ENCODE measurements at regions of chr9 and their contacts with region 1.

Region 1: GRCh38 chr9:20479419-20480155 is 142.7 kb downstream of the MLLT3 start:
- DNase-seq: no peak
- H3K4me3 ChIP-seq: no peak overlapping the region
- H3K27ac ChIP-seq: no peak overlapping the region
- H3K4me1 ChIP-seq: no peaks in the 10 kb centered on the region
- H3K27me3 ChIP-seq: no peaks in the 10 kb centered on the region
- CTCF ChIP-seq: no peak
- POLR2A ChIP-seq: no peak

Region 2: GRCh38 chr9:20209391-20210340 is 269.9 kb before region 1 on chr9:
- intact Hi-C with region 1: no loop called
- DNase-seq: no peak
- H3K4me3 ChIP-seq: no peak overlapping the region
- H3K27ac ChIP-seq: no peak overlapping the region
- H3K4me1 ChIP-seq: no peaks in the 10 kb centered on the region
- H3K27me3 ChIP-seq: no peaks in the 10 kb centered on the region
- CTCF ChIP-seq: no peak
- POLR2A ChIP-seq: no peak

Region 3: GRCh38 chr9:20462410-20462809 is 17.2 kb before region 1 on chr9:
- intact Hi-C with region 1: no loop called
- DNase-seq: no peak
- H3K4me3 ChIP-seq: no peak overlapping the region
- H3K27ac ChIP-seq: no peak overlapping the region
- H3K4me1 ChIP-seq: no peaks in the 10 kb centered on the region
- H3K27me3 ChIP-seq: no peaks in the 10 kb centered on the region
- CTCF ChIP-seq: no peak
- POLR2A ChIP-seq: no peak

Region 4: DNA sequence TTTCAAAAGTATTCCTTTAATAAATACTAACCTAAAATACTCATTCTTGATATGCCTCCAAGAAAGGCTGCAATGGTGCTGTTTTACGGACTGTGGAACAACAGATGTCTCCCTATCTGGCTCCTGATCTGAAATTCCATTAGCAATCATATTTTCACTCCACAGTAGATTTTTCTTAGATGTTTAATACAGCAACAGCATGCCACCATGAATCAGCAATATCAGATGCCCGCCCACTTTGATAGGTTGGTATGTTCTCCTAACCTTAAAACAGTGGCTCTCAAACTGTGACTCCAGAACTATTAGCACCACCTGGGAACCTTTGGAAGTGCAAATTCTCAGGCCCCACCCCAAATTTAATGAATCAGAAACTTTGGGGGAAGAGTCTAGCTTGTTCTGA is 32.5 kb after region 1 on chr9:
- intact Hi-C with region 1: loop called (anchors 2 kb)
- DNase-seq: no peak
- H3K4me3 ChIP-seq: no peak overlapping the region
- H3K27ac ChIP-seq: no peak overlapping the region
- H3K4me1 ChIP-seq: no peaks in the 10 kb centered on the region
- H3K27me3 ChIP-seq: no peaks in the 10 kb centered on the region
- CTCF ChIP-seq: no peak
- POLR2A ChIP-seq: no peak